Thyroid gland (tissue), 4 donors: ENCODE measurements at regions of chr19 and their contacts with region 1.

Region 1: DNA sequence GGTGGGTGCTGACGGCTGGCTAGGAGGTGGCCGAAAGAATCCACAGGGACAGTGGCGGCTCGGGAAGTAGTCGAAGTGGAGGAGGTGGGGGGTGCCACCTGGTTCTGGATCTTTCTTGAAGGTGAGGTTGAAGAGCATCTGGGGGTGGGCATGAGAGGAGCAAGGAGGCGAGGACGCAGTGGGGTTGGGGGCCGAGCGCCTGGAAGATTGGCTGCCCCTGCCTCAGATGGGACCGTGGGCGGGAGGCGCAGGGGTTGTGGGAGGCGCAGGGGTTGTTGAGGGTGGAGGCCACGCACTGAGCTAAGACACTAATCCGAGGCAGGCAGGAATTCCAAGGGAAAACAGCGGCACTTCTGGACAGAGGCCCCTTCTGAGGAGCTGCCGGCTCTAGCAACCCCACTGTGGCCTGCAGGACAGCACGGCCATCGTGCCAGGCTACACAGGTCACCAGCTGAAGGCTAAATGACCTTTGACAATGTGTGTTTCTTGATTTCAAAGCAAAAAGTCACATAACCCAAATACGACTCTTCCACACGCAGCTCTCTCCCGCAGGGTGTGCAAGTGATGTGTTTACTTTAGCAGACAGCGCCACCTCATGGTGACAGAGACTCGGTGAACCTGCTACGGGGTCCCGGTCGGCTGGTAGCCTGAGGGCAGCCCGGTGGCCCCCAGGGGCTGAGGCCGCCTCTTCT is 44.1 kb upstream of the RANBP3 start:
- DNase-seq: peak; percentile 84 to 88
- H3K4me3 ChIP-seq: no peak overlapping the region
- H3K27ac ChIP-seq: no peak overlapping the region
- H3K4me1 ChIP-seq: peaks cover 0 to 10% of the 10 kb centered on the region in 2 donors
- H3K27me3 ChIP-seq: no peaks in the 10 kb centered on the region
- CTCF ChIP-seq: peak; percentile 51 to 87 (median 84)
- POLR2A ChIP-seq: no peak

Region 2: GRCh38 chr19:5001615-5002014 is 1020.4 kb before region 1 on chr19:
- intact Hi-C with region 1: no loop called
- DNase-seq: peak; percentile 33 to 54
- H3K4me3 ChIP-seq: no peak overlapping the region
- H3K27ac ChIP-seq: peak overlapping the region; percentile 88 to 95 (median 89)
- H3K4me1 ChIP-seq: peaks cover 39 to 55% of the 10 kb centered on the region in 2 donors
- H3K27me3 ChIP-seq: no peaks in the 10 kb centered on the region
- CTCF ChIP-seq: peak in 5 of 6 experiments; percentile 25 to 72 (median 60)
- POLR2A ChIP-seq: no peak

Region 3: DNA sequence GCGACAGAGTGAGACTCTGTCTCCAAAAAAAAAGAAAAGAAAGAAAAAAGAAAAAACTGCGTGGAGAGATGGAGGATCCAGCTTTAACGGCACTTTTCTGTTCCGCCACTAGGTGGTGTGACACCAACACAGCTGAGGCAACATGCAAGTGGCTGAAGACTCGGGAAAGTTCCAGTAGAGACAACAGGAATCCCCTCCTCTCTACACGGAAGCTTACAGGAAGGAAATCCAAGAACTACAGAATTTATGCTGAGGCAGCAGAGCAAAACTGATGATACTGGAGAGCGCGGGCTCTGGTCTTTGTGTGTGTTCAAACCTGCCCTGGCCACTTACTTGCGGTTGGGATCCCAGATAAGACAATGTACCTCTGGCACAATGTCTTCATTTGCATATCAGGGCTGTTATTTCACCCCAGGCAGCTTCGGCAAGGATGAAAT is 54.0 kb before region 1 on chr19:
- intact Hi-C with region 1: no loop called
- DNase-seq: peak; percentile 76 to 77
- H3K4me3 ChIP-seq: peak overlapping the region in 1 of 3 donors; percentile 1
- H3K27ac ChIP-seq: peak overlapping the region; percentile 61 to 95 (median 91)
- H3K4me1 ChIP-seq: peaks cover 23 to 42% of the 10 kb centered on the region in 2 donors
- H3K27me3 ChIP-seq: no peaks in the 10 kb centered on the region
- CTCF ChIP-seq: peak; percentile 80 to 93 (median 88)
- POLR2A ChIP-seq: no peak

Region 4: DNA sequence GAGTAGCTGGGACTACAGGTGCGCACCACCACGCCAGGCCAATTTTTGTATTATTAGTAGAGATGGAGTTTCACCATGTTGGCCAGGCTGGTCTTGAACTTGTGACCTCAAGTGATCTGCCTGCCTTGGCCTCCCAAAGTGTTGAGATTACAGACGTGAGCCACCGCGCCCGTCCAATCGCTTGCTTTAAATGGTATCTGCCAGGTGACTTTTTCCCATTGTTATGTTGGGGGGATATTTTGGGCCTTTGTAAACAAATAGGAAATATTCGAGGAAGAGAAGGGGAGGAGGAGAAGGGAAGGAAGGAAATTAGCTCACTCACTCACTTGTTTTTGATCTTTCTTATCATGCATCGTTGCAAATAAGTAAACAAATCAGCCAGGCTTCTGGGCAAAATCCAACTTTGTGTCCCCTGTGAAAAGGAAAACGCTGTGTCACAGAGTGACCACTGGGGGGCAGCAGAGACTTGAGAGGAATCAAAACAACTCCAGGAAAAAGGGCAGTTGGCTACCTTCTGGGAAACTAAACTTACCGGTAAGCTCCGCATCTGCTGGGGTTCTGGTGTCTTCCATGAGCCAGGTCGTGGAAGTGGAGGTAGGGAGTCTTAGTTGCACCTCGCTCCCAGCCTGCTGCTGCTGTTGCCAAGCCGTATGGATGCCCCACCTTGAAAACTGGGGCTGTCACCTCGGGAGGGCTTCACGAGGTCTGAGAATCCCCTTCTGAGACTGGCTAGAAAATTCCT is 34.8 kb before region 1 on chr19:
- intact Hi-C with region 1: loop called (anchors 5 kb)
- DNase-seq: peak; percentile 77 to 89
- H3K4me3 ChIP-seq: peak overlapping the region in 1 of 3 donors; percentile 11
- H3K27ac ChIP-seq: peak overlapping the region in 2 of 3 donors; percentile 11 to 31
- H3K4me1 ChIP-seq: peaks cover 10 to 34% of the 10 kb centered on the region in 2 donors
- H3K27me3 ChIP-seq: no peaks in the 10 kb centered on the region
- CTCF ChIP-seq: peak; percentile 80 to 97 (median 95)
- POLR2A ChIP-seq: no peak

Region 5: DNA sequence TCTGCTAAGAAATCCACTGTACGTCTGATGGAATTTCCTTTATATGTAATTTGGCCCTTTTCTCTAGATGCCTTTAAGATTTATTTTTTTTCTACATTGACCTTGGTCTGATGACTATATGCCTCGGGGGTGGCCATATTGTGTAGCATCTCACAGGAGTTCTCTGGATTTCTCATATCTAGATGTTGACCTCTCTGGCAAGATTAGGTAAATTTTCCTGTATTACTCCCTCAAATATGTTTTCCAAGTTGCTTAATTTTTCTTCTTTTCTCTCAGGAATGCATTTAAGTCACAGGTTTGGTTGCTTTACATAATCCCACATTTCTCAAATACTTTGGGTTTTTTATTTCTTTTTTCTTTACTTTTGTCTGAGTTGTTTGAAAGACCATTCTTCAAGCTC is 149.5 kb after region 1 on chr19:
- intact Hi-C with region 1: no loop called
- DNase-seq: no peak
- H3K4me3 ChIP-seq: no peak overlapping the region
- H3K27ac ChIP-seq: no peak overlapping the region
- H3K4me1 ChIP-seq: no peaks in the 10 kb centered on the region
- H3K27me3 ChIP-seq: no peaks in the 10 kb centered on the region
- CTCF ChIP-seq: no peak
- POLR2A ChIP-seq: no peak